ENCODE measurements at regions of chr10 and their contacts with region 1.

Region 1: DNA sequence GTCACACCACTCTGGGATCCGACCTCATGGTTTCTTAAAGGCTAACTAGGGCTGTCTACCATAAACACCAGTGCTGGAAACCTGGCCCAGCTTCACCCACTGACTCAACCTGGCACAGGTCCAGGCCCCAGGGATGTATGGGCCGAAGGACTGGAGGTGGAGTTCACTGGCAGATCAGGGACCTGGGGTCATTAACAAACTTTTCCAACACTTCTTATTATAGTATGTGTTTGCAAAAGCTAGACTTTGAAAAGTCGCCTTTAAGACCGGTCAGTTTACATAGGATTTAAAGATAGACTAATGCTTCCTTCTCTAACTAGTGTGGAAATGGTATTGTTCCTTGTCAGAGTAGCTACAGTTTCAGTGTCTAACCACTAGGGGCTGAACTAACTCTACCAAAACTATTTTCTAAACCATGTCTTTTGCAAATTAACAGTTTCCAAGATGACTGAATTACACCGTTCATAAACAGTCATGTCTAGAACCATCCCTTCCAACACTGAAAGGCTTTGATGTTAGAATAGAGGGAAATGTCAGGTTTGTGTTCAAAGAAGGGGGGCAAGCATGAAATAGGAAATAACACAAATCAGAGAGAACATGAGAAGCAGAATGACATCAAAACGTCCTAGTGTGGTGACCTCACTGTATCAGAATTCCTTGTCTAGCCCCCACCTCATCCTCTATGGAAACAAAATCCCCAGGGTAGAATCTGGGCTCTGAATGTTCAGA is 29.7 kb downstream of the STN1 start:
- DNase-seq: peak; percentile 73
- H3K4me3 ChIP-seq: no peak overlapping the region
- H3K27ac ChIP-seq: peak overlapping the region; percentile 33
- H3K27me3 ChIP-seq: no peaks in the 10 kb centered on the region
- CTCF ChIP-seq: peak; percentile 92

Region 2: GRCh38 chr10:103720328-103720963 is 167.8 kb before region 1 on chr10:
- CTCF ChIA-PET with region 1: interaction called, 186 read pairs
- POLR2A ChIA-PET with region 1: no interaction called
- DNase-seq: no peak
- H3K4me3 ChIP-seq: no peak overlapping the region
- H3K27ac ChIP-seq: peak overlapping the region; percentile 47
- H3K27me3 ChIP-seq: no peaks in the 10 kb centered on the region
- CTCF ChIP-seq: no peak

Region 3: DNA sequence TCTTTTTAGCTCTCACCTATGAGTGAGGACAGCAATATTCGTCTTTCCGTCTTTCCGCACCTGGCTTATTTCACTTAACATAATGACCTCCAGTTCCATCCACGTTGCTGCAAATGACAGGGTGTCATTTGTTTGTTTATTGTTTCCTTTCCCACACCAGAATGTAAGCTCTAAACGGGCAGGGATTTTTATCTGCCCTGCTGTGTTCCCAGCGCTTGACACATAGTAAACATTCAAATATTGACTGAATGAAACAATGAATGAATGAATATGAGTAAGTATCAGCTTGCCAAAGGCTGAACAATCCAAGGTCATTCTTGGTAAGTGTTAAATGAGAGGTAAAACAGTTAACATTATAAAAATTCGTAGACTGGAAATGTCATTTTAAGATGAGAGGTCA is 45.7 kb before region 1 on chr10:
- CTCF ChIA-PET with region 1: no interaction called
- POLR2A ChIA-PET with region 1: no interaction called
- DNase-seq: no peak
- H3K4me3 ChIP-seq: no peak overlapping the region
- H3K27ac ChIP-seq: no peak overlapping the region
- H3K27me3 ChIP-seq: no peaks in the 10 kb centered on the region
- CTCF ChIP-seq: no peak

Region 4: DNA sequence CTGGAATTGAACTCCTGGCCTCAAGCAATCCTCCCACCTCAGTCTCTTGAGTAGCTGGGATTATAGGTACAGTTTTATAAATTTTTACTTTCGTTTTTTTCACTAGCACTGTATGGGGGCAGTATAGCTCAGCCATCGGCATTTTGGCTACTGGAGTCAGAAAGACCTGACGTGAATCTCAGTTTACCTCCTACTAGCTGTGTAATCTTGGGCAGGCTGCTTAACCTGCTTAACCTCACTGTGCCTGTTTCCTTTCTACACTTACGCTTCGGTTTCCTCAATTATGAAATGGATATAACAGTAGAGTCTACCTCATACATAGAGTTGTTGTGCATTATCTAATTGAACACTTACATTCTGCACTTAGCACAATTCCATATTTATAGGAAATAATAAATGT is 13.0 kb after region 1 on chr10:
- CTCF ChIA-PET with region 1: interaction called, 21 read pairs
- POLR2A ChIA-PET with region 1: no interaction called
- DNase-seq: no peak
- H3K4me3 ChIP-seq: no peak overlapping the region
- H3K27ac ChIP-seq: no peak overlapping the region
- H3K27me3 ChIP-seq: no peaks in the 10 kb centered on the region
- CTCF ChIP-seq: no peak

Region 5: DNA sequence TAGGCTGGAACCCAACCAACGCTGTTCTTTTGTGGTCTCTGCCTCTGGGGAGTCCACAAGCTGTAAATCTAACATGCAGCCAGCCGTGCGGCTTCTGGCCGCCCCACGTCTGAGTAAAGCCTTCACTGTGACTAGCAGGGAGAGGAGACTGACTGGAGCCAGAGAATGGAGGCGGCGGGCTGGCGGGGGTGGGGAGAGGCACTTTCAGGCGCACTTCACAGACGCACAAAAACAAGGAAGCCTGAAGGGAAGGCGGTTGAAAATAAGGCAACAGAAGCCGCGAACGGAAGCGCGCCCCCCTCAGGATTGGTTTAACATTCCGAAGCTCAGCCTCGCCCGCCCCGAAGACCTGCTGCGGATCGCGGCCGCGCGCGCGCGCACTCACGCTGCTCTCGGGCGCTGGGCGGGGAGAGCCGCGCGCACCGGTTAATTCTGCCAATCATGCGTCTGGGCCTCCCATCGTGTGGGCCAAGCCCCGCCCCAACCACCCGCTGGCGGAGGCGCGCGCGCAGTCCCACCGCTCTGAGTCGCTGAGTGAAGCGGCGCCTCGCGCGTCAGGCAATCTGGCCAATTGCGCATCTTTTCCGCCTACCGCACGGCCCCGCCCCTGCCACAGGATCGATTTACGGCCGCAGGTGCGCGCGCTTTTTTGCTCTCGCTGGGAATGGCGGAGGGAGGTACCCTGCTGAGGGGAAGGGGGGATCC is 233.4 kb after region 1 on chr10 and contains the start of gene SFR1:
- CTCF ChIA-PET with region 1: interaction called, 35 read pairs
- POLR2A ChIA-PET with region 1: interaction called, 4 read pairs
- DNase-seq: peak; percentile 94
- H3K4me3 ChIP-seq: peak within 1 kb of the TSS; percentile 90
- H3K27ac ChIP-seq: peak within 1 kb of the TSS; percentile 99
- H3K27me3 ChIP-seq: no peaks in the 10 kb centered on the region
- CTCF ChIP-seq: peak; percentile 62
- polyA plus RNA-seq, gene SFR1: 2.6 and 3.9 TPM in 2 replicates